ENCODE measurements at regions of chr4 and their contacts with region 1.

Region 1: DNA sequence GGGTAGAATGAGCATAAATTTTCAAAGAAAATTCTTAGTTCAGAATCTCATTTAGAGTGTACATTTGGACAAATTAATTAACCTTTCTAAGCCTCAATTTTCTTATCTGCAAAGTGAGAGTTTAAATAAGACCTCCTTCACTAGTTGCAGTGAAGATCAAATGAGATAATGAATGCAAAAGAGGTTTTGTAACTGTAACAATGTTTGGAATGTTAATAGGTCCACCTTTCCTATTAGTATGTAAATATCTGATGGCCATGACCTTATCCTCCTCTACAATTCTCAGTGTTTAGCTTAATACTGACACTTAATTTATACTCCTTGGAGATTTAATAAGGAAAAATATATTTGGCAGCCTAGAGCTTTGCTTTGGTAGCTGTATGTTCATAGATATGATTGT is 138.8 kb downstream of the GABRG1 start:
- DNase-seq: no peak
- ATAC-seq: no peak
- H3K4me3 Mint-ChIP-seq: no peak overlapping the region
- H3K27ac Mint-ChIP-seq: no peak overlapping the region
- H3K4me1 Mint-ChIP-seq: no peaks in the 10 kb centered on the region
- H3K27me3 Mint-ChIP-seq: no peaks in the 10 kb centered on the region

Region 2: GRCh38 chr4:45865781-45866180 is 119.3 kb before region 1 on chr4:
- CTCF ChIA-PET with region 1: no interaction called
- POLR2A ChIA-PET with region 1: no interaction called
- intact Hi-C with region 1: no loop called
- DNase-seq: no peak
- ATAC-seq: no peak
- H3K4me3 Mint-ChIP-seq: no peak overlapping the region
- H3K27ac Mint-ChIP-seq: no peak overlapping the region
- H3K4me1 Mint-ChIP-seq: no peaks in the 10 kb centered on the region
- H3K27me3 Mint-ChIP-seq: no peaks in the 10 kb centered on the region

Region 3: GRCh38 chr4:45920861-45921260 is 64.2 kb before region 1 on chr4:
- CTCF ChIA-PET with region 1: no interaction called
- POLR2A ChIA-PET with region 1: no interaction called
- intact Hi-C with region 1: loop called in 1 of 2 experiments (anchors 10 kb)
- DNase-seq: no peak
- ATAC-seq: no peak
- H3K4me3 Mint-ChIP-seq: no peak overlapping the region
- H3K27ac Mint-ChIP-seq: no peak overlapping the region
- H3K4me1 Mint-ChIP-seq: no peaks in the 10 kb centered on the region
- H3K27me3 Mint-ChIP-seq: no peaks in the 10 kb centered on the region

Region 4: DNA sequence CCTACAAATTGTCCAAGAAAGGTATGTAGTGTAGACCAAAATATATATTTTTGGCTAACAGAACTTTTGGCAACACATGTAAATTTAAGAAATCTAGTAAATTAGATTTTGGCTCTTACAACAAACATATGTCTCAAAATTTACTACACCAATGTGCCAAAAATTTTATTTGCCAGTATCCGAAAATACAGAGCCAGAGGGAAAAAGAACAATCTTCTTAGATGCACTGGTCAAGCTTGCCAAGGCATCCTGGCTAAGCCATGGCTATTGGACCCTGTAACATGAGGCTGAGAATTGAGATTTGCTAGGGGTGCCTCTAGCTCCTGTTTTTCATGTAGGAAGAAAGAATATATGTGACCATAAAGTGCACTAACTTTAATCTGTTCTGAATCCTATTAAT is 47.0 kb after region 1 on chr4:
- CTCF ChIA-PET with region 1: no interaction called
- POLR2A ChIA-PET with region 1: no interaction called
- intact Hi-C with region 1: no loop called
- DNase-seq: no peak
- ATAC-seq: no peak
- H3K4me3 Mint-ChIP-seq: no peak overlapping the region
- H3K27ac Mint-ChIP-seq: no peak overlapping the region
- H3K4me1 Mint-ChIP-seq: no peaks in the 10 kb centered on the region
- H3K27me3 Mint-ChIP-seq: no peaks in the 10 kb centered on the region

Region 5: DNA sequence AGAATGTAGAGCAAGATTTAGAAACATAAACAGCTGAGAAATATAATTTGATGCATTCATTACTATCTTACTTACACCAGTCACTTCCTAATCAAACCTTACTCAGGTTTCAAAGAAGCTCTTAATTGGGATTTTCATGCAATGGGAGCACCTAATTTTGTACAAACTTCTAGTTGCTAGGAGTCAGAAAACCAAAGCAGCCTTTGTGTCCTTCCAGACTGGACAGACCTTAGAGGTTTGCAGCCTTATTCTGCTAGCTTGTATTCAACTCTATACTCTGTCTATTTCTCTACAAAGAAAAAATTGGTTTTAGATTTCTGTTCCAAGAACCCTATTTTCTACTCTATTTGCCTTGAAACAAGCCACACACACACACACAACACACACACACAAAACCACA is 385.5 kb after region 1 on chr4:
- CTCF ChIA-PET with region 1: no interaction called
- POLR2A ChIA-PET with region 1: no interaction called
- intact Hi-C with region 1: no loop called
- DNase-seq: no peak
- ATAC-seq: no peak
- H3K4me3 Mint-ChIP-seq: no peak overlapping the region
- H3K27ac Mint-ChIP-seq: no peak overlapping the region
- H3K4me1 Mint-ChIP-seq: no peaks in the 10 kb centered on the region
- H3K27me3 Mint-ChIP-seq: no peaks in the 10 kb centered on the region

Region 6: DNA sequence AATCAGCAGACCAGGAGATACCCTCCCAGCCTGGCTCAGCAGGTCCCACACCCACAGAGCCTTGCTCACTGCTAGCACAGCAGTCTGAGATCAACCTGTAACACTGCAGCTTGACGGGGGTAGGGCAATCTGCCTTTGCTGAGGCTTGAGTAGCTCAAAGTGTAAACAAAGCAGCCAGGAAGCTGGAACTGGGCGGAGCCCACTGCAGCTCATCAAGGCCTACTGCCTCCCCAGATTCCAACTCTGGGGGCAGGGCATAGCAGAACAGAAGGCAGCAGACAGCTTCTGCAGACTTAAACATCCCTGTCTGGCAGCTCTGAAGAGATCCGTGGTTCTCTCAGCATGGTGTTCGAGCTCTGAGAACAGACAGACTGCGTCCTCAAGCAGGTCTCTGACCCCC is 419.9 kb after region 1 on chr4:
- CTCF ChIA-PET with region 1: no interaction called
- POLR2A ChIA-PET with region 1: no interaction called
- intact Hi-C with region 1: no loop called
- DNase-seq: no peak
- ATAC-seq: no peak
- H3K4me3 Mint-ChIP-seq: no peak overlapping the region
- H3K27ac Mint-ChIP-seq: no peak overlapping the region
- H3K4me1 Mint-ChIP-seq: no peaks in the 10 kb centered on the region
- H3K27me3 Mint-ChIP-seq: no peaks in the 10 kb centered on the region

Measured in activated CD4-positive, alpha-beta T cell treated with anti-CD3 and anti-CD28 coated beads for 36 hours (primary cell).